ENCODE measurements at regions of chr1 and their contacts with region 1.

Region 1: DNA sequence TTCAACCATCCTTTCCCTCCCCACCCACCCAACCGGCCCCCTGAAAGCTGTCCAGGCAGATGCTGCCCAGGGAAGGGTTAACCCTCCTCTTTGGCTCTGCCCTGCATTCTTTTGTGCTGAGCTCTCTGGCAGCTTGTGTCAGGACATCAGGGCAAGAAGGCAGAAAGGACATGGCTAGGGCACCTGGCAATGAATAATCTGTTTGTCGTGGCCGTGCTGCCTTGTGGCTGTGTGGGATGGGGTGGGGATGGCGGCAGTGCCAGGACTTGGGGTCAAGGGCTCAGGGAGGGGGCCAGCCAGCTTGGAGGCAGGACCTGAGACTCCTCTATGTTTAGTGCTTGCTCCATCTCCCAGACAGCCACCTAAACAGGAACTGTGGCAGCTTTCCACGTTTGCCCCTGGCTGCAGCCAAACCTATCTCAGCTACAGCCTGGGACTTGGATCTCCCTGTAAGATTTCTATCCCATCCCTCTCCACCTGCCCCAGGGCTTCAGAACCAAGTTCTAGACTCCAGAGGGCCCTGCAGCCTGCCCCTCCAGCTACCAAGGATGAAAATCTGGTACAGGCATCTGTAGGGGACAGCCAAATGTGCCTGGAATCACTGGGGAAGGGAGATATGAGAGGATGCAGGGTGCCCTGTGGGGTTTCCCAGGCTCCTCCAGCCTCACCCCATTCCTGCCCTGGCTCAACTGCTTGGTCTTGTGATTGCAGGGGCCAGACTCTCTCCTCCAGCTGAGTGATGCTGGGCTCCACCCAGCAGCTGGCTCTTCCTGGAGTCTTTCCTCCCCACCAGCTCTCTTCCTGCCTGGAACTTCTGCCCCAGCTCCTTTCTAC is 9.7 kb upstream of the GPR37L1 start:
- DNase-seq: peak in 2 of 4 donors; percentile 30 to 49
- ATAC-seq: peak; percentile 59
- H3K4me3 ChIP-seq: no peak overlapping the region
- H3K27ac ChIP-seq: no peak overlapping the region
- H3K4me1 ChIP-seq: peaks cover 3 to 5% of the 10 kb centered on the region in 2 donors
- H3K27me3 ChIP-seq: no peaks in the 10 kb centered on the region
- CTCF ChIP-seq: no peak

Region 2: DNA sequence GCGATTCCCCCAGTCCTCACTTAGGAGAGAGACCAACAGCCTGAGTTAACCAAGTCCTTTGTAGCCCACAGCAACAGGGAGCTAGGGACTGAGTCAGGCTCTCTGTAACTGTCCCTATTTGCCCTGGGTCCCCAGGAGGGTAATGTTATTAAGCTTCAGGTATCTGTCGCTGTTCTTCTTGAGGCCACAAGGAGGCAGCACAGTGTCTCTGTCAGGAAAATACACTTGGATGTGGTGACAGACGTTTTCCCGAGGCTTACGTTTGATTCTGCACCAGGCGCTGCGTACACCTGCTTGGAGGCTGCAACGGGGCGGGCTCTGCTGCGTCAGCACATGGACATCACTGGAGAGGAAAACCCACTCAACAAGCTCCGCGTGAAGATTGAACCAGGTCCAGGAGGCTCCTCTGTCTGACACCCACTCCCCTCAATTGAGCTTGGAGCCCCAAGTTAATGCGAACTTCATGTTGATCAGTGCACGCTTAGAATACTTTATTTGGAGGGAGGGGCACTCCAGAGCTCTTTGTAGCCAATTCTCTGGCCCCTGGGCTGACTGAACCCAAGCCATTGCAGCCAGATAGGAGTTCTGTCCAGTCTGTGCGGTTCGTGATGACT is 113.3 kb before region 1 on chr1:
- intact Hi-C with region 1: loop called (anchors 5 to 10 kb)
- DNase-seq: peak in 1 of 4 donors; percentile 66
- ATAC-seq: peak; percentile 90
- H3K4me3 ChIP-seq: no peak overlapping the region
- H3K27ac ChIP-seq: no peak overlapping the region
- H3K4me1 ChIP-seq: no peaks in the 10 kb centered on the region
- H3K27me3 ChIP-seq: no peaks in the 10 kb centered on the region
- CTCF ChIP-seq: peak; percentile 60 to 68

Region 3: DNA sequence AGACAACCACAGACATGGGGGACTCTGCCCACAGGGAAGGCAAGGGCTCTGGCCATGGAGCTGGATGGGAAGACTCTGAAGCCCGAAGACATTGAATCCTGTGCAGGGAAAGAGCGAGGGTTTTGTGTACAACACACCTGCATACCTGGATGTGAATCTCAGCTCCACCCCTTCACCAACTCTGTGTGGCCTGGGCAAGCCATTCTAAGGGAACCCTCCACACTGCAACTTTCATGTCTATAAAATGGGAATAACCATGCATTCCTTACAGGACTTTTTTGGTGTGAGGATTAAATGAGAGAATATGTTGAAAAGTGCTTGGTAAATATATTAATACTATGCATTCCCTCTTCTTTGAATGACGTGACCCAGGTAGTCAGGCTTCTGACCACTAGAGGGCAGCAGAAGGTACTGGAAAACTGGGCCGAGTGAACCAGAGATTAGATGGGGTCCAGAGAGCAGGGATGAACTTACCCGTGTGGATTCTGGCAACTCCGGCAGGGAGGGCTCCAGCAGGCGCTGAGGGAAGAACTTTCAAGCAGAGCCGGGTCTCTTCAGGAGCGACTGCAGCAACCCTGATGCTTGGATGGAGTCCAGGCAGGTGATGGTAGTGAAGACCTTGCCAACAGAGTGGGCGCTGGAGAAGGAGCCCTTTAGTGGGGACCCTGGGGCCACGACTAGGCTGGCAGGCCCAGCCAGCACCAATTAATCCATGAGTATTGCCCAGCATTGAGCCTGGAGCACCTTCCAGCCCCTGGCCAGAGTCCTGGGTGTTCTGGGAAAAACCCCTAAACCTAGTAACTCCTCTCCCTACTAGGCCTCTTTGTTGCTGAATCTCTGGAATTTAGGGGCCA is 103.5 kb before region 1 on chr1:
- intact Hi-C with region 1: loop called (anchors 5 to 10 kb)
- DNase-seq: peak in 3 of 4 donors; percentile 69 to 89 (median 74)
- ATAC-seq: peak; percentile 65
- H3K4me3 ChIP-seq: no peak overlapping the region
- H3K27ac ChIP-seq: peak overlapping the region; percentile 54 to 69
- H3K4me1 ChIP-seq: peaks cover 0 to 4% of the 10 kb centered on the region in 2 donors
- H3K27me3 ChIP-seq: no peaks in the 10 kb centered on the region
- CTCF ChIP-seq: peak; percentile 79 to 86

Measured in left lung (tissue), 14 donors.